MCF 10A (cell line): ENCODE measurements at regions of chr11 and their contacts with region 1.

Region 1: GRCh38 chr11:31107062-31107461 is 262.5 kb downstream of the DCDC1 start:
- DNase-seq: peak; percentile 67
- H3K4me3 Mint-ChIP-seq: no peak overlapping the region
- H3K27ac Mint-ChIP-seq: no peak overlapping the region
- H3K4me1 Mint-ChIP-seq: no peaks in the 10 kb centered on the region
- H3K27me3 Mint-ChIP-seq: peaks cover 57% of the 10 kb centered on the region
- CTCF ChIP-seq: peak; percentile 49

Region 2: GRCh38 chr11:30926130-30926529 is 180.9 kb before region 1 on chr11:
- CTCF ChIA-PET with region 1: no interaction called
- POLR2A ChIA-PET with region 1: no interaction called
- intact Hi-C with region 1: no loop called
- DNase-seq: no peak
- H3K4me3 Mint-ChIP-seq: no peak overlapping the region
- H3K27ac Mint-ChIP-seq: no peak overlapping the region
- H3K4me1 Mint-ChIP-seq: no peaks in the 10 kb centered on the region
- H3K27me3 Mint-ChIP-seq: peaks cover 56% of the 10 kb centered on the region
- CTCF ChIP-seq: no peak

Region 3: DNA sequence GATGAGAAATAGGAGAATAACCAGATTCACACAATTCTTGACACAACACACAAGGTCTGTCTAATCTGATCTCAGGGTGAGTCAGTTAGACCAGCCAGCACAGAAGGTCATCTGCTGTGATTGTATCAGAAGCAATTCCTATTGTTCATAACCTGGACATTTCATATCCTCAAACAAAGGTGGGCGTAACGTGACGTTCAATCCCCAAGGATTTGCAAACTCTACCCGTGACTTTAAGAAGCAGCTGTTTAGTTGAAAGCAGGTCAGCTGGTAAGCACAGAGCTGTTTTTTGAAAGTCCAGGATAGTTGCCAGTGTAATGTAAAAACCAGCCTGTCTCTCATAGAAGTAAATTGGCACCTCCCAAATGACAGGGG is 122.6 kb before region 1 on chr11:
- CTCF ChIA-PET with region 1: no interaction called
- POLR2A ChIA-PET with region 1: no interaction called
- intact Hi-C with region 1: no loop called
- DNase-seq: no peak
- H3K4me3 Mint-ChIP-seq: no peak overlapping the region
- H3K27ac Mint-ChIP-seq: no peak overlapping the region
- H3K4me1 Mint-ChIP-seq: no peaks in the 10 kb centered on the region
- H3K27me3 Mint-ChIP-seq: peaks cover 63% of the 10 kb centered on the region
- CTCF ChIP-seq: no peak

Region 4: GRCh38 chr11:31118566-31118965 is 11.5 kb after region 1 on chr11:
- CTCF ChIA-PET with region 1: interaction called, 31 read pairs
- POLR2A ChIA-PET with region 1: no interaction called
- intact Hi-C with region 1: no loop called
- DNase-seq: no peak
- H3K4me3 Mint-ChIP-seq: no peak overlapping the region
- H3K27ac Mint-ChIP-seq: no peak overlapping the region
- H3K4me1 Mint-ChIP-seq: no peaks in the 10 kb centered on the region
- H3K27me3 Mint-ChIP-seq: peaks cover 55% of the 10 kb centered on the region
- CTCF ChIP-seq: no peak

Region 5: GRCh38 chr11:31233424-31233823 is 126.4 kb after region 1 on chr11:
- CTCF ChIA-PET with region 1: interaction called, 77 read pairs
- POLR2A ChIA-PET with region 1: interaction called, 6 read pairs
- intact Hi-C with region 1: loop called (anchors 1 kb)
- DNase-seq: peak; percentile 19
- H3K4me3 Mint-ChIP-seq: no peak overlapping the region
- H3K27ac Mint-ChIP-seq: no peak overlapping the region
- H3K4me1 Mint-ChIP-seq: peaks cover 4% of the 10 kb centered on the region
- H3K27me3 Mint-ChIP-seq: no peaks in the 10 kb centered on the region
- CTCF ChIP-seq: peak; percentile 43

Region 6: GRCh38 chr11:31369348-31370329 is 262.6 kb after region 1 on chr11 and contains the starts of genes DCDC1 and DNAJC24:
- CTCF ChIA-PET with region 1: interaction called, 6 read pairs
- POLR2A ChIA-PET with region 1: interaction called, 4 read pairs
- intact Hi-C with region 1: loop called (anchors 10 kb)
- DNase-seq: peak; percentile 89
- H3K4me3 Mint-ChIP-seq: peak within 1 kb of the TSS; percentile 85
- H3K27ac Mint-ChIP-seq: peak within 1 kb of the TSS; percentile 92
- H3K4me1 Mint-ChIP-seq: no peaks in the 10 kb centered on the region
- H3K27me3 Mint-ChIP-seq: peaks cover 32% of the 10 kb centered on the region
- CTCF ChIP-seq: no peak
- total RNA-seq, gene DCDC1: 0.19 TPM in 1 of 2 replicates, not detected in the other
- total RNA-seq, gene DNAJC24: 19.0 and 23.7 TPM in 2 replicates

Region 7: GRCh38 chr11:31702966-31703365 is 595.9 kb after region 1 on chr11:
- CTCF ChIA-PET with region 1: no interaction called
- POLR2A ChIA-PET with region 1: no interaction called
- intact Hi-C with region 1: no loop called
- DNase-seq: peak; percentile 14
- H3K4me3 Mint-ChIP-seq: no peak overlapping the region
- H3K27ac Mint-ChIP-seq: no peak overlapping the region
- H3K4me1 Mint-ChIP-seq: no peaks in the 10 kb centered on the region
- H3K27me3 Mint-ChIP-seq: no peaks in the 10 kb centered on the region
- CTCF ChIP-seq: no peak

Region 8: GRCh38 chr11:32297611-32298011 is 1190.5 kb after region 1 on chr11:
- CTCF ChIA-PET with region 1: interaction called, 16 read pairs
- POLR2A ChIA-PET with region 1: no interaction called
- intact Hi-C with region 1: no loop called
- DNase-seq: peak; percentile 50
- H3K4me3 Mint-ChIP-seq: no peak overlapping the region
- H3K27ac Mint-ChIP-seq: no peak overlapping the region
- H3K4me1 Mint-ChIP-seq: no peaks in the 10 kb centered on the region
- H3K27me3 Mint-ChIP-seq: no peaks in the 10 kb centered on the region
- CTCF ChIP-seq: peak; percentile 39